ENCODE measurements at regions of chr1 and their contacts with region 1.

Region 1: DNA sequence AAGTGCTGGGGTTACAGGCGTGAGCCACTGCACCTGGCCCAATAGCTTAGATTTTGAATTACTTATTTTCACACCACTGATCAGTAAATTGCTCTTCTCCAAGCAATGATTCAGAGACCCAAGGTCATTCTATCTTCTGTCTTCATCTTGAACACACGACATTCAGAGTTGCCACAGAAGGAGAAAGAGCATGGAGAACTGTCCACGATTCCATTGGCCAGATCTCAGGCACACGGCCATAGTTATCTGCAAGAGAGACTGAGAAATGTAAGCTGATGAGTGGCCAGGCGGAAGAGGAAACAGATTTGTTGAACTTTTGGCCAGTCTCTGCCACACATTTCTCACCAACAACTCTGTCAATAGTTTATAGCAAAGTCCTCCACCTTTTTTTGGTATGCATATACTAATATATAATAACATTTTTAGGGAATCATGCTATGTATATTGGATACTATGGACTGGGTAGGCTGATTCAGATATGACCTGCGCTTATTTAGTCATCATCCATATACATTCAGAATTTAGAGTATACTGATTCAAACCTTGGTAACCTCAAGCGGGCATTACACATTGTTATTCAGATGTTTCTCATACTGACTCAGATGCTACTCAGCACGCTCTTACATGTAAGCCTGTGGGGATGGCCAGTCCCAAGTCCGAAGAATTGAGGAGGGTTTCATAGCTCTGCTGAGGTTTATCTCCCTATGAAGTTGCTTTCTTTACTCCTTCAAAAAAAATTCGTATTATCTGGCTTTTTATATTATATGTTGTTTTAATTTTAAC is 25.5 kb upstream of the CAP1 start:
- DNase-seq: peak; percentile 95
- H3K4me3 ChIP-seq: peak overlapping the region in 1 of 3 experiments; percentile 23
- H3K27ac ChIP-seq: peak overlapping the region; percentile 77
- H3K4me1 ChIP-seq: peaks cover 24% of the 10 kb centered on the region
- H3K27me3 ChIP-seq: no peaks in the 10 kb centered on the region
- CTCF ChIP-seq: no peak

Region 2: GRCh38 chr1:39733161-39733560 is 281.8 kb before region 1 on chr1:
- CTCF ChIA-PET with region 1: no interaction called
- dilution Hi-C with region 1: no loop called
- in situ Hi-C with region 1: no loop called
- intact Hi-C with region 1: no loop called
- DNase-seq: peak; percentile 19
- H3K4me3 ChIP-seq: no peak overlapping the region
- H3K27ac ChIP-seq: no peak overlapping the region
- H3K4me1 ChIP-seq: peaks cover 9% of the 10 kb centered on the region
- H3K27me3 ChIP-seq: no peaks in the 10 kb centered on the region
- CTCF ChIP-seq: no peak

Region 3: DNA sequence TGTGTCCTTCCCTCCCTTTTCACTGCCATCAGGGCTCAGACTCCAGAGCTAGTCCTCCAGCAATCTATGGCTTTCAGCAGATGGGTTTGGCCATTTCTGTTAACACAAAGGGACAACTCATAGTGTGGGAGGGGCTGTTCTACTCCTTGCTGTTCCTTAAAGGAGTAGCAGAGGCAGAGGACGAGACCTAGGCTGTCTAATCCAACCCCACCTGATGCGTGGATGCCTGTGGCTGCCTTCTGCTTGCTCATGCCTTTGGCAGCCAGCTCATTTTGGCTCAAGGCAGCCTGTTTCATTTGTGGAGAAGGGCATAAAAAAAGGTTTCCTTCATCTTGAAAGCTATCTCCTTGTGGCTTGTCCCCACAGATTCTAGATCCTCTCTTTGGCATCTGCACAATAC is 33.0 kb before region 1 on chr1:
- CTCF ChIA-PET with region 1: no interaction called
- dilution Hi-C with region 1: no loop called
- in situ Hi-C with region 1: no loop called
- intact Hi-C with region 1: loop called (anchors 1 kb)
- DNase-seq: peak; percentile 96
- H3K4me3 ChIP-seq: no peak overlapping the region
- H3K27ac ChIP-seq: peak overlapping the region; percentile 60
- H3K4me1 ChIP-seq: peaks cover 30% of the 10 kb centered on the region
- H3K27me3 ChIP-seq: no peaks in the 10 kb centered on the region
- CTCF ChIP-seq: no peak

Region 4: GRCh38 chr1:39992234-39992633 is 22.8 kb before region 1 on chr1:
- CTCF ChIA-PET with region 1: no interaction called
- dilution Hi-C with region 1: no loop called
- in situ Hi-C with region 1: no loop called
- intact Hi-C with region 1: no loop called
- DNase-seq: no peak
- H3K4me3 ChIP-seq: no peak overlapping the region
- H3K27ac ChIP-seq: no peak overlapping the region
- H3K4me1 ChIP-seq: peaks cover 29% of the 10 kb centered on the region
- H3K27me3 ChIP-seq: no peaks in the 10 kb centered on the region
- CTCF ChIP-seq: no peak

Region 5: GRCh38 chr1:40040511-40041465 is 25.8 kb after region 1 on chr1 and contains the start of gene CAP1:
- CTCF ChIA-PET with region 1: no interaction called
- dilution Hi-C with region 1: no loop called
- in situ Hi-C with region 1: no loop called
- intact Hi-C with region 1: loop called (anchors 1 kb)
- DNase-seq: peak; percentile 99
- H3K4me3 ChIP-seq: peak within 1 kb of the TSS; percentile 93 to 98 (median 98)
- H3K27ac ChIP-seq: peak within 1 kb of the TSS; percentile 85
- H3K4me1 ChIP-seq: peaks cover 46% of the 10 kb centered on the region
- H3K27me3 ChIP-seq: no peaks in the 10 kb centered on the region
- CTCF ChIP-seq: no peak
- total RNA-seq, gene CAP1: 715 to 877 TPM

Measured in mammary epithelial cell (primary cell).